ENCODE measurements at regions of chr5 and their contacts with region 1.

Region 1: GRCh38 chr5:134503088-134503946 is 22.2 kb upstream of the JADE2 start:
- DNase-seq: peak; percentile 98
- H3K4me3 ChIP-seq: no peak overlapping the region
- H3K27ac ChIP-seq: peak overlapping the region; percentile 82
- H3K4me1 ChIP-seq: peaks cover 17% of the 10 kb centered on the region
- H3K27me3 ChIP-seq: no peaks in the 10 kb centered on the region
- CTCF ChIP-seq: no peak
- POLR2A ChIP-seq: peak; percentile 51

Region 2: DNA sequence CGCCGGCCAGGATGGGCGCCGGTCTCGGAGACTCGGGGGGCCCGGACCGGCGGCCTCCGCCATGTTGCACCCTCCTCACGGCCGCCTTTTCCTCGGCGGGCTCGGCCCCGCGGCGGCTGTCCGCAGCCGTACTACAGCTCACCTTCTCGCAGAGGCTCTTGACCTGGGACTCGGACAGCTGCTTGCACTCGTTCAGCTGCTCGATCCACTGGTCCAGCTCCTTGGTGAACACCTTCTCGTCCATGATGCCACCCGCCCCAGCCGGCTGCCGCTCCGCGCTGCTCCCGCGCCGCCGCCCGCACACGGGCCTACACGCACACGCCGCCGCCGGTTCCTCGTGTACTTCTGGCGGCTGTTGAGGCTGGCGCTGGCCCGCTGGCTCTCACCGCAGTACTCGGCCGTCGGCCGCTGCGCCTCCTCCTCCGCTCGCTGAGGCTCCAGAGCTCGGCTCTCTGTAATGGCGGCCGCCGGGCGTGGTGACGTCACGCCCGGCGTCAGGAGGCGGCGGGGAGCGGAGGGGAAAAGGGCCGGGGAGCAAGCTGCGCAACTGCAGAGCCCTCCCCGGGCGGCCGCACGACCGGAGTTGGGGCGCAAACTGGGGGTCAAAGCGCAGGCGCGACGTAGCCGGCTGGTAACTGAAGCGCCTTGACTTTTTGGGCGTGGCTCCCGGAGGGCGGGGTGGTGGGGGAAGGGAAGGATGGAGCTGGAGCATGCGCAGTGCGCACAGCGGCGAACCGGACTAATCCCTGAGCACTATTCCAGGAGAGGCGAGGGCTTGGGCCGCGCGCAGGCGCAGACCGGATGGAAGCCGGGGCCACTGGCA is 277.5 kb before region 1 on chr5 and contains the start of gene PPP2CA:
- CTCF ChIA-PET with region 1: no interaction called
- POLR2A ChIA-PET with region 1: no interaction called
- dilution Hi-C with region 1: no loop called
- intact Hi-C with region 1: loop called (anchors 1 kb)
- DNase-seq: peak; percentile 100
- H3K4me3 ChIP-seq: peak within 1 kb of the TSS; percentile 63 to 91 (median 84)
- H3K27ac ChIP-seq: peak within 1 kb of the TSS; percentile 96
- H3K4me1 ChIP-seq: peaks cover 29% of the 10 kb centered on the region
- H3K27me3 ChIP-seq: no peaks in the 10 kb centered on the region
- CTCF ChIP-seq: peak in 1 of 2 donors; percentile 5
- POLR2A ChIP-seq: peak; percentile 18
- total RNA-seq, gene PPP2CA: 163 and 183 TPM in 2 replicates

Region 3: GRCh38 chr5:134349463-134349862 is 153.9 kb before region 1 on chr5:
- CTCF ChIA-PET with region 1: no interaction called
- POLR2A ChIA-PET with region 1: no interaction called
- dilution Hi-C with region 1: no loop called
- intact Hi-C with region 1: no loop called
- DNase-seq: no peak
- H3K4me3 ChIP-seq: no peak overlapping the region
- H3K27ac ChIP-seq: no peak overlapping the region
- H3K4me1 ChIP-seq: no peaks in the 10 kb centered on the region
- H3K27me3 ChIP-seq: no peaks in the 10 kb centered on the region
- CTCF ChIP-seq: no peak
- POLR2A ChIP-seq: no peak

Region 4: GRCh38 chr5:134411546-134412266 is 91.6 kb before region 1 on chr5 and contains the start of gene CDKN2AIPNL:
- CTCF ChIA-PET with region 1: interaction called, 18 read pairs
- POLR2A ChIA-PET with region 1: no interaction called
- dilution Hi-C with region 1: no loop called
- intact Hi-C with region 1: loop called (anchors 1 kb)
- DNase-seq: peak; percentile 86
- H3K4me3 ChIP-seq: peak within 1 kb of the TSS; percentile 75 to 88 (median 84)
- H3K27ac ChIP-seq: peak within 1 kb of the TSS; percentile 40
- H3K4me1 ChIP-seq: peaks cover 15% of the 10 kb centered on the region
- H3K27me3 ChIP-seq: no peaks in the 10 kb centered on the region
- CTCF ChIP-seq: peak; percentile 71 to 86
- POLR2A ChIP-seq: peak; percentile 86
- total RNA-seq, gene CDKN2AIPNL: 35.1 and 36.5 TPM in 2 replicates

Region 5: GRCh38 chr5:134465816-134466240 is 37.5 kb before region 1 on chr5:
- CTCF ChIA-PET with region 1: interaction called, 19 read pairs
- POLR2A ChIA-PET with region 1: interaction called, 11 read pairs
- dilution Hi-C with region 1: no loop called
- intact Hi-C with region 1: loop called (anchors 1 kb)
- DNase-seq: peak; percentile 94
- H3K4me3 ChIP-seq: peak overlapping the region in 2 of 3 experiments; percentile 29 to 46
- H3K27ac ChIP-seq: peak overlapping the region; percentile 94
- H3K4me1 ChIP-seq: peaks cover 17% of the 10 kb centered on the region
- H3K27me3 ChIP-seq: no peaks in the 10 kb centered on the region
- CTCF ChIP-seq: no peak
- POLR2A ChIP-seq: peak; percentile 66

Region 6: DNA sequence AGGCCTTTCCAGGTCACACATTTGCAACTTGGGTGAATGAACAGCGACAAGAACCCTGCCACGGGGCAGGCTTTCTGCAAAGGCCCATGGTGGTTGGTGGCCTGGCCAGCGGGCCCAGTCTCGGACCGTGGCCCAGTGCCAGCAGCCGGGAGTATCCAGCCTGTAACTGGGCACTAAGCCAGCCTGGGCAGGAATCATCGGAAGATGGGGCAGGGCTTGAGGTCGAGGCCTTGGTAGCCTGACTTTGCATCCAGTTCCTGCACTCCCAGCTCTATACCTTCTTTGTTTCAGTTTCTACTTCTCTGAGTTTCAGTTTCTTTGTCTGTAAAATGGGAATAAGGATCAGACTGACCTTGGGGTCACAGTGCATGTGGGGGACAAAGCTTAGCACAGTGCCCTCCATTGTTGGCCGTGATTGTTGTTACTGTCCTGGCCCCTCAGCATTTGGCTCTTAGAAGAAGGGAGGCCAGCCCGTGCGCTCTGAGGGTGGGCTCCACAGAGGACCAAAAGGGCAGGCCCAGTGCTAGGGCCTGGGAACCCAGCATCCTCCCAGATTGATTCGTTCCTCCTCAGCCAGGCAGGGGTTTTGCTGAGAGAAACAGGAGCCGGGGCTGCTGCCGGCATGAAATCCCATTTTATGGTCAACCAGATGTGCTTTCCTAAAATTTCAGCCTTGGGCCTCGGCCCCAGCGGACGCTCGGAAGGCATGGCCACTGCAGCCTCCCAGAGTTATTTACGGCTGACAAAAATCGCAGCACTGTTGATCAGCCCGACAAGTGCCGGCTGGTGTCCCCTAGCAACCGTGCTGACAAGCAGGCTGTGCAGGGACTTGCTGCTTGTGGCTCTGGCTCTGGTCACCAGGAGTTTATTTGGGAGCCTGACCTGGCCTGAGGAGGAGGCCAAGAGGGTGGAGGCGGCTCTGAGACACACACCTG is 65.7 kb after region 1 on chr5:
- CTCF ChIA-PET with region 1: interaction called, 3 read pairs
- POLR2A ChIA-PET with region 1: interaction called, 6 read pairs
- dilution Hi-C with region 1: no loop called
- intact Hi-C with region 1: loop called (anchors 2 kb)
- DNase-seq: peak; percentile 83
- H3K4me3 ChIP-seq: no peak overlapping the region
- H3K27ac ChIP-seq: peak overlapping the region; percentile 61
- H3K4me1 ChIP-seq: peaks cover 36% of the 10 kb centered on the region
- H3K27me3 ChIP-seq: no peaks in the 10 kb centered on the region
- CTCF ChIP-seq: no peak
- POLR2A ChIP-seq: no peak

Region 7: DNA sequence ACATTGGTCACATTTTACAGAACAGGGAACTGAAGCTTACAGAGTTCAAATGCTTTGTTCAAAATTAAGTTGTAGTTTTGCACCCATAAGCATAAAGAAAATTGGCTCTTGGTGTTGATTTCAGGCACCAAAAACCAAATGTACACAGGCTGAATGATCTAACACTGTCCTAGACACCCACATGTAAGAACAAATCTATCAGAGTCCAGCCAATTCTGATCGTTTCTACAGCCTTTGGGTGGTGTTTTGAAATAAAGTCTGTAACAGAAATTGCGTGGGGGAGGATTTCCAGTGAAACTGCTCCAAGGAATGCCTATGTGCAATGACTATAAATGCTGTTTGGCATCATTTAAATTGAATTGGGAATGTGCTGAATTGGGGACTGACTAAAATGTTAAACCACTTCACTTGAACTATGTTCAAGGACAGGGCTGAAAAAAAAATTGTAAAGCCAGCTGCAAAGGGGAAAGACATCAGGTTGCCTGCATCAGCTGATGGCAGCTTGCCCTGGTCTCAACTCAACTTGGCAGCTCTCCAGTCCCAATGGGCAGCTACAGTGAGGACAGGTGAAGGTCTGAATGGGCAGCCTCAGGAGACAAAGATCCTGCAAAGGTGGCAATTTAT is 1954.2 kb after region 1 on chr5:
- CTCF ChIA-PET with region 1: no interaction called
- POLR2A ChIA-PET with region 1: no interaction called
- dilution Hi-C with region 1: no loop called
- intact Hi-C with region 1: no loop called
- DNase-seq: no peak
- H3K4me3 ChIP-seq: no peak overlapping the region
- H3K27ac ChIP-seq: no peak overlapping the region
- H3K4me1 ChIP-seq: no peaks in the 10 kb centered on the region
- H3K27me3 ChIP-seq: peaks cover 3 to 14% of the 10 kb centered on the region in 2 experiments
- CTCF ChIP-seq: no peak
- POLR2A ChIP-seq: no peak

Measured in endothelial cell of umbilical vein (primary cell).